Mammary epithelial cell (primary cell): ENCODE measurements at regions of chr1 and their contacts with region 1.

Region 1: GRCh38 chr1:119870917-119871596 is 25.3 kb downstream of the ADAM30 start:
- DNase-seq: peak; percentile 57
- H3K4me3 ChIP-seq: no peak overlapping the region
- H3K27ac ChIP-seq: no peak overlapping the region
- H3K4me1 ChIP-seq: peaks cover 25% of the 10 kb centered on the region
- H3K27me3 ChIP-seq: no peaks in the 10 kb centered on the region
- CTCF ChIP-seq: peak; percentile 98 to 99

Region 2: DNA sequence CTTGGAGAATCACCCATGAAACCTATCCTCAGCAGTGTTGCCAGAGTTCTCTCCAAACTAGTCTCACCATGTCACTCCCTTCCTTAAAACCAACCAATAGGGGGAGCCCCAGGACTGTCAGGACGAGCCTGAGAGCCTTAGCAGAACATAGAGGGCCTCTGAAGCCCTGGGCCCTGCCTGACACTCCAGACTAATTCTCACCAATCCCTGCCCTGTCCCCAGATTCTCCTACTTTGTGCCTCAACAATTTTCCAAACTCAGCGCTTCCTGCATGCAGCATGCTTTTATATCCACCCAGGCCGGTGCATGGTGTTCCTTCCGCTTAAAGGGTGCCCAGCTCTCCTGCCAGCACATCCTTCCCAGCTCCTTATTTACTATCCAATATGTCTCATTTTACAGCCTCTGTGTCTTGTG is 321.3 kb before region 1 on chr1:
- CTCF ChIA-PET with region 1: no interaction called
- dilution Hi-C with region 1: no loop called
- in situ Hi-C with region 1: no loop called
- intact Hi-C with region 1: loop called (anchors 5 kb)
- DNase-seq: peak; percentile 73
- H3K4me3 ChIP-seq: no peak overlapping the region
- H3K27ac ChIP-seq: no peak overlapping the region
- H3K4me1 ChIP-seq: peaks cover 17% of the 10 kb centered on the region
- H3K27me3 ChIP-seq: no peaks in the 10 kb centered on the region
- CTCF ChIP-seq: peak; percentile 64 to 79

Region 3: GRCh38 chr1:119743781-119744597 is 127.1 kb before region 1 on chr1:
- CTCF ChIA-PET with region 1: no interaction called
- dilution Hi-C with region 1: no loop called
- in situ Hi-C with region 1: no loop called
- intact Hi-C with region 1: loop called (anchors 2 kb)
- DNase-seq: peak; percentile 67
- H3K4me3 ChIP-seq: no peak overlapping the region
- H3K27ac ChIP-seq: no peak overlapping the region
- H3K4me1 ChIP-seq: peaks cover 25% of the 10 kb centered on the region
- H3K27me3 ChIP-seq: no peaks in the 10 kb centered on the region
- CTCF ChIP-seq: peak; percentile 77 to 84

Region 4: DNA sequence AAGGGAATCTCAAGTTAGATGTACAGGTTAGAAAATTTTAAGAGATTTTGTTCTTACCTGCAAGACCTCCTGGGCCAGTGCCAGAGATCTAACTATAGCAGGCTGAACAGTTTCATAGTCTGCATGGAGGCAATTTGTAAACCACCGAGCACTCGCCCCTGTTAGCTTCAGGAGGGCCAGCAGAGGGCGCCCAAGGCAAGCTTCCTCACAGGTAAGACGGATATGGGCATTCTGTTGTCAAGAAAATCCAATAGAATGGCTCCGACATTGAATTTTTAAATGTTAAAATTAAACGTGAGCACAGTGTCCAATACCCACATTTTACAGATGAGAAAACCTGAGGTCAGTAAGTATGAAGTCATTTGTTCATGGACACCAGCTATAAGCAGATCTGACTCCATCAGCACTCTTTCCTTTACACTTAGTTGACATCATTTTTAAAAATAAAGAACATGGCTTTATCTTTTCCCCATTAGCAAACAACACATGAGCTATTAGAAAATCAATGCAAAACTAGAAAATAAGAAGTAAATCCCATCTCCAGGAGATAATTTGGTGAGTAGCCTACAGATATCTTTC is 62.0 kb before region 1 on chr1:
- CTCF ChIA-PET with region 1: no interaction called
- dilution Hi-C with region 1: no loop called
- in situ Hi-C with region 1: loop called in 1 of 2 experiments (anchors 5 kb)
- intact Hi-C with region 1: loop called (anchors 5 kb)
- DNase-seq: peak; percentile 54
- H3K4me3 ChIP-seq: no peak overlapping the region
- H3K27ac ChIP-seq: no peak overlapping the region
- H3K4me1 ChIP-seq: peaks cover 5% of the 10 kb centered on the region
- H3K27me3 ChIP-seq: no peaks in the 10 kb centered on the region
- CTCF ChIP-seq: peak; percentile 94

Region 5: DNA sequence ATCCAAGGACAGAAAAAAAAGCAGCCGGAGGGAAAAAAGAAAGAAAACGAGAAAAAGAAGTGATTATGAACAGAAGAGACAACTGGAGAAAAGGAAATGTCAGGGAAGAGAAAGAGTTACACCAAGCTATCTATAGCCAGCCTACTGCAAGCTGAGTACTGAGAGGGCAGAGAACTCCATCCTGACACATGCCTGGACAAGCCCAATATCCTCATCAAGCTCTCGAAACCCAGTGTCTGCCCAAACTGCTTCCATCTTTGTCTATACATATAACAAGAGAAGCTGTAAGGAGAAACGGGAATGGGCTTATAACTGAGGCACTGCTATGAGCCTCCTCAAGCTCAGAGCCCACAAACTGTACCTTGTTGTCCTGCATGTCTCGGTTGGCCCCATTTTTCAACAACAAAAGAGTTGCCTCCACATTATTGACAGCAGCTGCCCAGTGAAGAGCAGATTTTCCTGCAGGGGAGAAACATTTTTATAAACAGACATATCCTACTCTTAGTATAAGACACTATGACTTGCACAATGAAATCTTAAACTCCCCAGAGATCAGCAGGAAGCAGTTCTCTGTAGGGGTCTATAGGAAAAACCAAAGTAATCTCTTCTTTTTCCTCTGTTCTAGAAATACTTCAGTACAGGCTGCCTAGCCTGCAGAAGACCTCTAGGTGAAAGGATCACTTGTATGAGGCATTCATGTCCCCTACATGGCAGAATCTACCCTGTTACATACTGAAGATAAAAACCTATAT is 46.4 kb after region 1 on chr1:
- CTCF ChIA-PET with region 1: no interaction called
- dilution Hi-C with region 1: no loop called
- in situ Hi-C with region 1: no loop called
- intact Hi-C with region 1: no loop called
- DNase-seq: peak; percentile 43
- H3K4me3 ChIP-seq: no peak overlapping the region
- H3K27ac ChIP-seq: peak overlapping the region; percentile 49
- H3K4me1 ChIP-seq: peaks cover 8% of the 10 kb centered on the region
- H3K27me3 ChIP-seq: no peaks in the 10 kb centered on the region
- CTCF ChIP-seq: no peak

Region 6: GRCh38 chr1:119929643-119930315 is 58.7 kb after region 1 on chr1:
- CTCF ChIA-PET with region 1: no interaction called
- dilution Hi-C with region 1: no loop called
- in situ Hi-C with region 1: no loop called
- intact Hi-C with region 1: loop called (anchors 5 kb)
- DNase-seq: peak; percentile 35
- H3K4me3 ChIP-seq: no peak overlapping the region
- H3K27ac ChIP-seq: no peak overlapping the region
- H3K4me1 ChIP-seq: no peaks in the 10 kb centered on the region
- H3K27me3 ChIP-seq: no peaks in the 10 kb centered on the region
- CTCF ChIP-seq: no peak

Region 7: DNA sequence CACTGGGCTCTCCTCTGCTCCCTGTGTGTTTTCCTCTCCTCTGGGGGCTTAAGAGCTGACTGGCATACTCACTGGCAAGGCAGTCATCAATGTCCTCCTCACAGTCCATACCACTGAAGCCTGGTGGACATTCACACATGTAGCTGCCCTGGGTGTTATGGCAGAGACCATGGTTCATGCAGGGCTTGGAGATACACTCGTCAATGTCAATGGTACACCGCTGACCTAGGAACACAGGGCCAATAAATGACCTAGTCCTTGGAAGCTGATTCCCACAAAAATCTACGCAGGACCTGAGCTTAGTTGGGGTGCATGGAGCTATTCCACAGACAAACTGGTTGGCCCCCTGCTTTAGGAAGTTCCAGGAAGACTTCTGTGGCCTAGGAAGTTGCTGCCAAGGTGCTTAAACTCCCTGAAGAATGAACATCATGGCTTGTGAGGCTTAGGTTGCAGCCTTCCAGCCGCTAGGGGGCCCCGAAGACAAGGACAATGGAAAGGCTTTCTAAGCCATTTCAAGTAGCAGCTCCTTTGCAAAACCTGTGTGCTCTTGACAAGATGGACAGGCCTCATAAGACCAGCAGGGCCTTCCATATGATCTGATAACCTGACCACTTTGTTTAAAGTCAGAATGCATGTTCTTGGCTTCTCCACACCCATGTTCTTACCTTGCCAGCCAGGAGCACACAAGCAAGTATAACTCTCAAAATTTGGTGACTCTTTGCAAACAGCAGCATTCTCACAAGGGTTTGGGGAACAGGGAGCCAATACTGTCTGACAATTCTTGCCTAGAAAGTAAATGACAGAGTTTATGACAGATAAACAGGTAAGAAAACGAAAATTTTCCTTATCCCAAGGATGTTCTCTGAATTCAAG is 77.5 kb after region 1 on chr1:
- CTCF ChIA-PET with region 1: no interaction called
- dilution Hi-C with region 1: no loop called
- in situ Hi-C with region 1: no loop called
- intact Hi-C with region 1: loop called (anchors 1 kb)
- DNase-seq: peak; percentile 64
- H3K4me3 ChIP-seq: no peak overlapping the region
- H3K27ac ChIP-seq: no peak overlapping the region
- H3K4me1 ChIP-seq: peaks cover 8% of the 10 kb centered on the region
- H3K27me3 ChIP-seq: no peaks in the 10 kb centered on the region
- CTCF ChIP-seq: peak; percentile 90 to 93